Mucosa of descending colon (tissue), 3 donors: ENCODE measurements at regions of chr16 and their contacts with region 1.

Region 1: GRCh38 chr16:66954097-66954659 is 6.9 kb upstream of the CES3 start:
- DNase-seq: peak in 2 of 3 donors; percentile 88 to 94
- ATAC-seq: peak; percentile 85
- H3K4me3 ChIP-seq: no peak overlapping the region
- H3K4me1 ChIP-seq: peaks cover 32% of the 10 kb centered on the region
- CTCF ChIP-seq: peak; percentile 49

Region 2: DNA sequence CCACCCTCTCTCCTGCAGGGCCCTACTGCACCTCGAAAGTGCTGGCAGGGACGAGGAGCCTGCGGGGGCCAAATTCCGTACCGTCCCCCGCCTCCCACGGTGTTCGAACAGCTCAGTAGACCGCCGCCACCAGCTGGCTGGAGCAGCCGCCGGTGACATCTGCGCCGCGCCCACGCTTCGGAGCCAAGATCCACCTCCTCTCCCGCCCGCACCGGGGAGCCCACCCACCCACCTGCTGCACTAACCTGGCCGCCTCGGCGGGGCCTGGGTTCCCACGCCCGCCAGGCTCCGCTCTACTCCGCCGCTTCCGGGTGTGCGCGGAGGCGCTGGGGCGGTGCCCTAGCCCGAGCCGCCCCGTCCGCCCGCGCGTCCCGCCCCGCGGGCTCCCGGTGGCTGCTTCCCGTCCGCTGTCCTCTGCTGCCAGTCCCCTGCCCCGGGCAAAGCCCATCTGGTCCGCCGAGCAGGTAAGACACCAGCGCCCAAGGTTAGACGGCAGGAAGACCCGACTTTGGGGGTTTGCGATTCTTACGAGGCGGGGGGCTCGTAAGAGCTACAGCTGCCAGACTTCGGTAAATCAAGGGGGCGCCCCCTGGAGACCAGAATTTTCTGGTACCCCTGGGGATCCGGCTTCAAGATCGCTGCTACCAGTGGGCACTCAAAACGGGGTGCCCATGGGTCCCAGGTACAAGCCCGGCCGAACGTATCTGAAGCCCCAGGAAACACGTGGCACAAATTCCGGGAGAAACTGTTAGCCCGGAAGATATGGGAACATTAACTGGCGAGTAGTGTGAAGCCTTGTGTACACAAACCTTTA is 205.6 kb after region 1 on chr16 and contains the starts of genes FBXL8 and TRADD:
- intact Hi-C with region 1: loop called in 1 of 2 experiments (anchors 10 kb)
- DNase-seq: peak; percentile 85 to 91 (median 90)
- ATAC-seq: peak; percentile 79
- H3K4me3 ChIP-seq: peak within 1 kb of the TSS; percentile 85
- H3K4me1 ChIP-seq: peaks cover 53% of the 10 kb centered on the region
- CTCF ChIP-seq: no peak
- total RNA-seq, gene FBXL8: 23.3 to 33.8 (median 24.5) TPM
- total RNA-seq, gene TRADD: 21.0 to 27.4 (median 26.6) TPM

Region 3: GRCh38 chr16:67349172-67349571 is 395.0 kb after region 1 on chr16:
- intact Hi-C with region 1: no loop called
- DNase-seq: no peak
- ATAC-seq: no peak
- H3K4me3 ChIP-seq: no peak overlapping the region
- H3K4me1 ChIP-seq: peaks cover 4% of the 10 kb centered on the region
- CTCF ChIP-seq: no peak